Caco-2 (cell line): ENCODE measurements at regions of chr14 and their contacts with region 1.

Region 1: GRCh38 chr14:24817212-24818057 is 183.4 kb upstream of the GZMB start:
- DNase-seq: peak; percentile 41 to 74
- H3K4me3 ChIP-seq: 0 out of 2 replicates have a peak overlapping the region, but pooled peaks have one; percentile 5
- H3K4me3 Mint-ChIP-seq: peak overlapping the region; percentile 68
- H3K27ac Mint-ChIP-seq: peak overlapping the region; percentile 89
- H3K4me1 ChIP-seq: peaks cover 69% of the 10 kb centered on the region
- H3K4me1 Mint-ChIP-seq: peaks cover 33% of the 10 kb centered on the region
- H3K27me3 ChIP-seq: no peaks in the 10 kb centered on the region
- H3K27me3 Mint-ChIP-seq: no peaks in the 10 kb centered on the region
- CTCF ChIP-seq: peak; percentile 27 to 35

Region 2: DNA sequence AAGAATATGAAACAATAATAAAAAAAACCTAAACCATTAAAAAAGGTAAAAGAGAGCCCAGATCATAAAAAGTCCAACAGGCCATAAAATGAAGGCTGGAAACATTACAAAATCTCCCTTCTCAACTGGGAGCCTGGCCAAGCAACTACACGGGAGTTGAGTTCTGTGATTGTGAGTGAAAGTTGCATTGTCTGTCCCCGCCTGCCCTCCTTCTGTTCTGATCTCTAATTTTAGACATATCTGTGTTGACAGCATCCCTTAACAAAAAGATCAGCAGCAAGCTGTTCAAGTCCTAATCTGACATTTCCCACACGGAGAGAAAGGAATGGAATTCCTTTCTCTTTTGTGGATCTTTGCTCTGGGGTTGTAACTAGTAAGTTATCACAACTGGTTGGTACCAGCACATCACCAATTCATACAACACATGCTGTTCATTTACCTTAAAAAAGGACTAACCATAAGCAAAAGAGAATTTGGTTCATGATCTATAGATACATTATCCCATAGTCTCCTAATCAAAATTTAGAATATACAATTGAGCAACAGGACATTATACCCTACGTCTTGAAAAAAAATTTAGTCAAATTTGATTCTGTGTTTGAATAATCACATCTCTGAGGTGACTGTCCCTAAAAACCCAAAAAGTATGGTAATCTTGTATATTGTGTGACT is 21.6 kb after region 1 on chr14:
- CTCF ChIA-PET with region 1: interaction called, 6 read pairs
- POLR2A ChIA-PET with region 1: interaction called, 7 read pairs
- intact Hi-C with region 1: loop called (anchors 1 kb)
- DNase-seq: peak in 1 of 2 experiments; percentile 36
- H3K4me3 ChIP-seq: no peak overlapping the region
- H3K4me3 Mint-ChIP-seq: peak overlapping the region; percentile 49
- H3K27ac Mint-ChIP-seq: peak overlapping the region; percentile 82
- H3K4me1 ChIP-seq: peaks cover 61% of the 10 kb centered on the region
- H3K4me1 Mint-ChIP-seq: peaks cover 36% of the 10 kb centered on the region
- H3K27me3 ChIP-seq: no peaks in the 10 kb centered on the region
- H3K27me3 Mint-ChIP-seq: no peaks in the 10 kb centered on the region
- CTCF ChIP-seq: no peak

Region 3: DNA sequence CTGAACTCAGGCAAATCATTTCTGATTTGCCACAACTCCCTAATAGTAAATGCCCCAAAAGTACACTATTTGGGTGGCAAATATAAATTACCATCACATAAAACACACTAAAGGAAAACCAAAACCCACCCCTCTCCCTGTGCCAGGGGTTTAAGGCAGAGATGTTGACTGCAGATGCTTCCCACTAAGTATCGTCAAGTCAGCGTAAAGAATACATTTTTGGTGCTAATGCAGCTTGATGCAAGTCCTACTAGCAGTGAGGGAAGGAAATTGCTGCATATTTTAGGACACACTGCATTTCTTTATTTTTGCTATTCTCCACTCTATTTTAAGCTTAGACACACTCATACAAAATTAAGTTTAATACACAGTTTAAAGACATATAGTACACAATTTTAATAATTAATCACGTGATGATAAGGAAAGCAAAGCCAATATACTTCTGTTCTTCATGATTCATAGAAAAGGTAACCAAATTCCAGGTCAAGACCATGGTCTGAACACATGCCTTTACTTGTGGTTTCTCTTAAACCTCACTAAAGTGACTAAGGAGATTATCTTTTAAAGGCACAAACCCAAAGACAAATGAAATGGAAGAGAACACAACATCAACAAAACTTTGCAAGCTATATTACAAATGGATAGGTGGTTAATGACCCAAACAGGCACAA is 70.3 kb after region 1 on chr14:
- CTCF ChIA-PET with region 1: interaction called, 4 read pairs
- POLR2A ChIA-PET with region 1: no interaction called
- intact Hi-C with region 1: loop called (anchors 5 kb)
- DNase-seq: no peak
- H3K4me3 ChIP-seq: no peak overlapping the region
- H3K4me3 Mint-ChIP-seq: no peak overlapping the region
- H3K27ac Mint-ChIP-seq: peak overlapping the region; percentile 70
- H3K4me1 ChIP-seq: peaks cover 42% of the 10 kb centered on the region
- H3K4me1 Mint-ChIP-seq: peaks cover 47% of the 10 kb centered on the region
- H3K27me3 ChIP-seq: no peaks in the 10 kb centered on the region
- H3K27me3 Mint-ChIP-seq: no peaks in the 10 kb centered on the region
- CTCF ChIP-seq: no peak

Region 4: GRCh38 chr14:24928386-24928900 is 111.0 kb after region 1 on chr14:
- CTCF ChIA-PET with region 1: no interaction called
- POLR2A ChIA-PET with region 1: no interaction called
- intact Hi-C with region 1: no loop called
- DNase-seq: no peak
- H3K4me3 ChIP-seq: no peak overlapping the region
- H3K4me3 Mint-ChIP-seq: no peak overlapping the region
- H3K27ac Mint-ChIP-seq: no peak overlapping the region
- H3K4me1 ChIP-seq: no peaks in the 10 kb centered on the region; the same call in 1 of the 2 replicates
- H3K4me1 Mint-ChIP-seq: peaks cover 7% of the 10 kb centered on the region
- H3K27me3 ChIP-seq: no peaks in the 10 kb centered on the region
- H3K27me3 Mint-ChIP-seq: no peaks in the 10 kb centered on the region
- CTCF ChIP-seq: no peak

Region 5: DNA sequence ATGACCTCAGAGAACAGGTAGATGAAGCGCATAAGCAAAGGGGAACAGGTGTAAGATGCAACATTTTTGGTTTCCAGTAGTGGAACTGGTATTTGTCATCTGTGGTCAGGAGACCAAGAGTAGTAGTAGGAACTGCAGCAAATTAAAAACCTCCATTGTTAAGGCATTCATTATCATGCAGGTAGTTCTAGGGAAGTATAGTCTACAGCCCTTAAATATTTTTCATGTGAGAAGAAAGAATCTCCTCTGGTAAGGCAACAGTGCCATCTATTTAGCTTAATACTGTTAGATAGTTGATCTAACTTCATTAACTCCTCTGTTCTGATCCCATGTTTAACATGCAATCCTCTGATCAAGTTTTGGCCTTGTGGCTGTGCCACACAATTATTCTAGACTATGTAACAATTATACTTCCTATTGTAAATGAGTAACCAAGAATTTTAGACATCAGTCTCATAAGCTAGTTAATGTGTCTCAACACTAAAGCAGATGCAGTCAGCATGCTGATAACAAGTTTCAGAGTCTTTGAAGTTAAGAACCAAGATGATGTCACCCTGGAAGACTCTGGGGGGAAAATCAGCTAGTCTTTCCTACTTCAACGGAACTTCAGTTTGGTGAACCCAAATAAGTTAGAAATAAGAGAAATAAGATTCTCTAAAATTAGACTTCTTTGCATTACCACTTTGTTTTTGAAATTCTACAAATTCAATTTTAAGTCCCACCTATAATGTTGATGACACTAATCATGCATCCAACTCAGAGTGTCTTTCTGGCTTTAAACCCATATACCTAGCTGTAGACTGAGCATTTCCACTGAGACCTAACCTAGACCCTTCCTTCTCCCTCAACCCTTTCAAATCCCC is 161.7 kb after region 1 on chr14:
- CTCF ChIA-PET with region 1: interaction called, 3 read pairs
- POLR2A ChIA-PET with region 1: interaction called, 7 read pairs
- intact Hi-C with region 1: loop called (anchors 2 kb)
- DNase-seq: peak; percentile 38 to 61
- H3K4me3 ChIP-seq: no peak overlapping the region
- H3K4me3 Mint-ChIP-seq: peak overlapping the region; percentile 54
- H3K27ac Mint-ChIP-seq: peak overlapping the region; percentile 78
- H3K4me1 ChIP-seq: peaks cover 74% of the 10 kb centered on the region
- H3K4me1 Mint-ChIP-seq: peaks cover 55% of the 10 kb centered on the region
- H3K27me3 ChIP-seq: no peaks in the 10 kb centered on the region
- H3K27me3 Mint-ChIP-seq: no peaks in the 10 kb centered on the region
- CTCF ChIP-seq: no peak